ENCODE measurements at regions of chr11 and their contacts with region 1.

Region 1: DNA sequence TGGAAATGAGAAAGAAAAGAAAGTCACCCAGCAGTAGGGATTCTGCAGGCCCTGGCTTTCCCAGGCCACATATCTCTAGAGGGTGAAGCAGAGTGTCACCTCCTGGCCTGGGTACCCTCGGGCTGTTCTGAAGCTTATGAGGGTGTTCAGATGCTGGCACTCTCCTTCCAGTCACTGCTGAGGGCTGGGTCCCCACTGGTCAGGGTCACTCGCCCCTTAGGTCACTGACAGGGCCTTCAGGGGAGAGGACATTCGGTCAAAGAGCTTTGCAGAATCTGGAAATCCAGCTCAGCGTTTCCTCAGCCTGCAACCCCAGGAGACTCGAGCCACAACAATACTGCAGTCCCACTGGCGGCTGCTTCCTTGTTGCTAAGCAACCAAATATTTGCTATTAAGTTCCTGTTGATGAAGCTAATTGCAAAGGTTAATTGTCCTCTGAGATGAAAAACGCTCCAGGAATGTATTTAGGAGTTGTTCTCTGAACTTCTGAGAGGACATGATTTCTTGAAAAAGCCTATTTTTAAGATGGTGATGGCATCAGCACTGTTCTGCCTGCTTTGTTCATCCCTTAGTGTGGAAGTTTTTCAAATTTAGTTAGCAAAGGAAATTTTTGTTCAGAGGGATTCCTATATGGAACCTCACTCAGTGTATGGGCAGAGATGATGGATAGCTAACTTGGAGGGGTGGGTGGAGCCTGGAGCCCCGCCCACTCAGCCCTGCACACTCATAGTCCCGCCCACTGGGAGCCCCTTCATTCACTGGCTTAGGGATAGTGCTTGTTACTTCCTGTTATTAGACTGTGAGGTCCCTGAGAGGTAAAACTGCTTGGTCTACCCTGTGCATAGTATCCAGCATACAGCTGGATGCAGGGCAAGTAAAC is 109.2 kb downstream of the CSNK2A3 start:
- DNase-seq: peak; percentile 41
- H3K4me3 ChIP-seq: no peak overlapping the region
- H3K27ac ChIP-seq: no peak overlapping the region
- H3K4me1 ChIP-seq: peaks cover 0 to 2% of the 10 kb centered on the region in 2 experiments; a peak in 1 of 4 replicates
- H3K27me3 ChIP-seq: no peaks in the 10 kb centered on the region
- CTCF ChIP-seq: no peak
- EP300 ChIP-seq: no peak
- RAD21 ChIP-seq: no peak

Region 2: DNA sequence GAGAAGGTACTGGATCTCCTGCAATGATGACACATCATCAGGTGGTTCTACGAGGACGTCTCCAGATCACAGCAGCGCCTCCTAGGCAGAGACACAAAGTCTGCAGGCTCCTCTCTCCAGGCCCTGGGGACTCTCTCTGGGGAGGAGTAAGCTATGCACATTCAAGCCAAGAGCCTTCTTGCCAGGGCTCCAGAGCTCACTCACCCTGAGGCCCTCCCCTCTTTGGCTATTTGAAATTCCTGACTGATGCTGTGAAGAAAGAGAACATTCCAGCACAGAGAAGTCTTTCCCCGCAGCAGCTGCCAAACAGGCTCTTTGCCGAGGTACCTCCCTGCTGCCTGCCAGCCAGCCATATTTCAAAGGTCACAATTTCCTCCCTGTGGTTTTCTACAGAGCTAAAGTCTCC is 95.7 kb before region 1 on chr11:
- CTCF ChIA-PET with region 1: no interaction called
- POLR2A ChIA-PET with region 1: no interaction called
- DNase-seq: no peak
- H3K4me3 ChIP-seq: no peak overlapping the region
- H3K27ac ChIP-seq: no peak overlapping the region
- H3K4me1 ChIP-seq: no peaks in the 10 kb centered on the region
- H3K27me3 ChIP-seq: no peaks in the 10 kb centered on the region
- CTCF ChIP-seq: peak; percentile 32; the same call in 1 of the 2 replicates
- EP300 ChIP-seq: no peak
- RAD21 ChIP-seq: no peak

Region 3: GRCh38 chr11:11230802-11231562 is 12.8 kb before region 1 on chr11:
- CTCF ChIA-PET with region 1: interaction called, 10 read pairs
- POLR2A ChIA-PET with region 1: no interaction called
- DNase-seq: peak; percentile 36
- H3K4me3 ChIP-seq: no peak overlapping the region
- H3K27ac ChIP-seq: no peak overlapping the region
- H3K4me1 ChIP-seq: no peaks in the 10 kb centered on the region
- H3K27me3 ChIP-seq: no peaks in the 10 kb centered on the region
- CTCF ChIP-seq: peak; percentile 44
- EP300 ChIP-seq: no peak
- RAD21 ChIP-seq: peak; percentile 46

Region 4: GRCh38 chr11:11569936-11570491 is 326.2 kb after region 1 on chr11:
- CTCF ChIA-PET with region 1: no interaction called
- POLR2A ChIA-PET with region 1: no interaction called
- DNase-seq: no peak
- H3K4me3 ChIP-seq: no peak overlapping the region
- H3K27ac ChIP-seq: no peak overlapping the region
- H3K4me1 ChIP-seq: peaks cover 0 to 17% of the 10 kb centered on the region in 2 experiments; a peak in 1 of 4 replicates
- H3K27me3 ChIP-seq: no peaks in the 10 kb centered on the region
- CTCF ChIP-seq: no peak
- EP300 ChIP-seq: no peak
- RAD21 ChIP-seq: no peak